ENCODE measurements at regions of chr16 and their contacts with region 1.

Region 1: DNA sequence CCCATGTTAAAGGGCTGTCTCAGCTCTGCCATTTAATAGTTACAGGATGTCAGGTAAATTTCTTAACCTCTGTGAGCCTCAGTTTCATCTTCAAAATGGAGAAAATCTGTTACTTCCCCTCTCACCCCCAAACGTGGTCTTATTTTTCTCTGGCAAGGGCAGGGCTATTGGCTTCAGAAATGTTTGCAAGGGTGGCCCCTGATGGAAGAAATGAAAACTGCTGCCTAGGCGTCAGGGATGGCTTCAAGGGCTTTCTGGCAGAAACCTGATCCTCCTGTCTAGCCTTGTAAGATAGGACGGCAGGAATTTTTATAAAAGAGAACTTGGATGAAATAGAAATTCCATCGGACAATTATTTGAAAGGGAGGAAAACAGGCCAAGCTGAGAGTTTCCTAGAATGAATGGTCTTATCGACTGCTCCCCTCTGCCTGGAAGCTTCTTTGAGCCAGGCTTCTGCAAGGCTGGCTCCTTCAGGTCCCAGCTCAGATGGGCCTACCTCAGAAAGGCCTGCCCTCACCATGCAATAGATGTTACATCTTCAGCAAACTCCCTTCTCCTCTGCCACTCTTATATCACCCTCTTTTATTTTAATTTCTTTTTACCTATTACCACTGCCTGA is 43.0 kb upstream of the TANGO6 start:
- DNase-seq: no peak
- H3K4me3 ChIP-seq: no peak overlapping the region
- H3K27ac ChIP-seq: no peak overlapping the region
- H3K4me1 ChIP-seq: peaks cover 0 to 4% (median 0%) of the 10 kb centered on the region in 4 donors
- H3K27me3 ChIP-seq: no peaks in the 10 kb centered on the region
- CTCF ChIP-seq: peak; percentile 34 to 81 (median 40)
- EP300 ChIP-seq: no peak
- POLR2A ChIP-seq: no peak

Region 2: DNA sequence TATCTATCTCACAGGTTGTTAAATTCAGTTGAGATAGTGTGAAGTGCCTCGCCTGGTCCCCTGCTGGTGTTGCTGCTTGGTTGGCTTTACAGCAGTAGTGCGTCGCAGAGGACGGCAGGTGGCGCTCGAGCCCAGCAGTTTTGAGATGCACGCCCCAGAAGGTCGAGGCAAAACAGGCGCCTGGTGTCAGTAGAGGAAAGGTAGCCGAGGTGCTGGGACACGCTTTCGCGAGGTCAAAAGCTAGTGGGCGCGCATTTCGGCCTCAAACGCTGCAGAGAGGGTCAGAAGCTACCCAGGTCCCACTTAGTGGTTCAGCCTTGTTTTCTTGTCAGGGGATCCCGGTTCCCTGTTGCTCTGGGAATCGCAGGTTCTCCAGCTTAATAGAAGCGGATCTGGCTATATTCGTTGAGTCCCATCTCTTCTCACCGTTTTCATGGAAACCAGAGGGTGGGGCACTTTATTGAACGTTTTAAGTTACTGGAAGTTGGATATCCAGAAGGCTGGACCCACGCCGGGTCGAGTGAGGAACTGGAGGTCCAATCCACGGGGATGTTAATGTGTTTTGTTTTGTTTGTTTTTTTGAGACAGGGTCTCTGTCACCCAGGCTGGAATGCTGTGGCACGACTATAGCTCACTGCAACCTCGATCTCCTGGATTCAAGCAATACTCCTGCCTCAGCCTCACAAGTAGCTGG is 271.5 kb before region 1 on chr16:
- intact Hi-C with region 1: loop called (anchors 5 kb)
- DNase-seq: peak; percentile 96
- H3K4me3 ChIP-seq: peak overlapping the region in 3 of 4 donors; percentile 11 to 66 (median 45)
- H3K27ac ChIP-seq: no peak overlapping the region
- H3K4me1 ChIP-seq: peaks cover 12 to 26% (median 21%) of the 10 kb centered on the region in 4 donors
- H3K27me3 ChIP-seq: peaks cover 0 to 16% (median 0%) of the 10 kb centered on the region in 4 donors
- CTCF ChIP-seq: peak; percentile 92 to 96 (median 95)
- EP300 ChIP-seq: no peak
- POLR2A ChIP-seq: no peak

Region 3: GRCh38 chr16:68704232-68704867 is 96.0 kb before region 1 on chr16:
- intact Hi-C with region 1: loop called (anchors 5 kb)
- DNase-seq: no peak
- H3K4me3 ChIP-seq: no peak overlapping the region
- H3K27ac ChIP-seq: no peak overlapping the region
- H3K4me1 ChIP-seq: no peaks in the 10 kb centered on the region
- H3K27me3 ChIP-seq: peaks cover 0 to 6% (median 0%) of the 10 kb centered on the region in 4 donors
- CTCF ChIP-seq: peak; percentile 40 to 66 (median 47)
- EP300 ChIP-seq: no peak
- POLR2A ChIP-seq: no peak

Measured in esophagus muscularis mucosa (tissue), 4 donors.